HEK293 (cell line): ENCODE measurements at regions of chr12 and their contacts with region 1.

Region 1: GRCh38 chr12:13069380-13069779 is 25.2 kb downstream of the FAM234B start:
- H3K4me3 ChIP-seq: no peak overlapping the region
- H3K27ac ChIP-seq: no peak overlapping the region
- H3K4me1 ChIP-seq: no peaks in the 10 kb centered on the region
- CTCF ChIP-seq: no peak

Region 2: DNA sequence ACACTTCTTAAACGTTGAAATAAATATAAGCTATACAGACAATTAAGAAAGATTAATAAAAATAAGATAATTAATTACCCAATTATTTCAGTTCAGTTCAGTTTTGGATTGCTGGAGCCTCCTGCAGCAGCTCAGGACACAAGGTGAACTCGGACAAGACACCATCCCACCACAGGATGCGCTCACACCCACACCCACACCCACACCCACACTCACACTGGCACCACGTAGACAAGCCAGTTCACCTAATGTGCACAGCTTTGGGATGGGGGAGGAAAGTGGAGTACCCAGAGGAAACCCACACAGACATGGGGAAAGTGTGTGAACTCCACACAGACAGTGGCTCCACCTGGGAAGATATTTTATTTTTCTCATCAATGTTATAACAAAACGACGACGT is 159.2 kb after region 1 on chr12:
- CTCF ChIA-PET with region 1: interaction called, 10 read pairs
- POLR2A ChIA-PET with region 1: no interaction called
- H3K4me3 ChIP-seq: no peak overlapping the region
- H3K27ac ChIP-seq: no peak overlapping the region
- H3K4me1 ChIP-seq: 0 out of 2 replicates have a peak, but pooled peaks cover under 1% of the 10 kb centered on the region
- CTCF ChIP-seq: no peak